Uterus (tissue), 4 donors: ENCODE measurements at regions of chr1 and their contacts with region 1.

Region 1: GRCh38 chr1:77832901-77833300 is 53.5 kb downstream of the MIGA1 start:
- DNase-seq: peak in 1 of 2 donors; percentile 38
- H3K4me3 ChIP-seq: no peak overlapping the region
- H3K27ac ChIP-seq: peak overlapping the region; percentile 87 to 92
- H3K4me1 ChIP-seq: peaks cover 6 to 25% of the 10 kb centered on the region in 2 donors
- H3K27me3 ChIP-seq: no peaks in the 10 kb centered on the region
- CTCF ChIP-seq: no peak
- POLR2A ChIP-seq: no peak

Region 2: DNA sequence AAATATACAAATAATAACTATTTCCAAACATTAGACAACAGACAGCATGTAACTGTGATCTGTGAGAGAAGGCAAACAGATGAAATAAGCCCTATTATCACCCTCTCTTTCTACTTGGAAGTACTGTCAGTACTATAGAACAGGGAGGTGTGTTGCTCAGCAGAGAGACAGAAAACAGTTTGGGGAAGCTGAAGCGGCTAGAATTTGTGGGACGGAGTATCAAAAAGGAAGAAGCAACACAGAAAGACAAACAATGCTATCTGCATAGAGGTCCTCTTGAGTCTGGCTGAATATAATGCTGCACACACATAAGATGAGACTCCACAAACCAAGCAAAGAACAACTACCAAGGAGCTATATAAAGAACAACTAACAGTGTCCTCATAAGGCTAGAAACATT is 209.8 kb before region 1 on chr1:
- intact Hi-C with region 1: no loop called
- DNase-seq: no peak
- H3K4me3 ChIP-seq: no peak overlapping the region
- H3K27ac ChIP-seq: no peak overlapping the region
- H3K4me1 ChIP-seq: no peaks in the 10 kb centered on the region
- H3K27me3 ChIP-seq: no peaks in the 10 kb centered on the region
- CTCF ChIP-seq: no peak
- POLR2A ChIP-seq: no peak

Region 3: DNA sequence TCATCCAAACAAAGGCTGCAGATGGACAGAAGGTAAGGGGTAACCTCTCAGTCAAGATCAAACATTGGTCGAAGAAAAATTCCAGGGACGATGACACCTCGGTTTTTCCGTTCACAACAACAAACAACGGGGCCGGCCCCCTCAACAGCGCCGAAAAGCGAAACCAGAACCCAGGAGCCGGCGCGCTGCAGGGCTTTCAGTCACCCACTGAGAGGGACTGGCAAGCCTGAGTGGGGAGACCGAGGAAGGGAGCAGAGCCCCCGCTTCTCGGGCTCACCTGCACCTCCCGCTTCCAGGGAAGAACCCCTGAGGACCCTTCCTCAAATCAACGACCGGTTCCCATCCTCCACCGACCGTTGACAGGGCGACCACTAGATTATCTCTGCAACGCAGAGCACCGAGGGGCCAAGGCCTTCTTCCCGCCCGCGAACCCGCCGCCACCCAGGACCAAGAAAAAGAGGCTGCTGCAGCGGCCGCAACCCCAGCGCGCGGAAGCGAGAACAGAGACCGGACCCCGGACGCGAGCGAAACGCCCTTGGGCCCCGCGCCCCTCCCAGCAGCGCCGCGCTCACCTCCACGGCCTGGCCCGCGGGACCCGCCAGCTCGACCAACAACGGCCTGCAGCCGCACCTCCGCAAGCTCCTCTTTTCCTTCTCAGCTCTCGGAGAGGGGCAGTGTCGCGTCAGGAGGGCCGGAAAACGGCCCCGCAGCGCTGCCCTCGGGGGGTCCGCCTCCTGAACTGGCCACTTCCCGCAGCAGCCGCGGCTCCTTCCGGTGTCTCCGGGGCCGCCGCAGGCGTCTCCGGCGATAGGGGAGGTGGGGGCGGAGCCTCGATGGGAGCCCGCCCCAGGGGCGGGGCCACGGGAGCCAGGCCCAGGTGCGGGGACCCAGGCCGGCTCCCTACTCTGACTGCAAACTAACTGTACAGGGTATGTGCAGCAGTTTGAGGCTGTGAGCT is 73.6 kb before region 1 on chr1 and contains the start of gene USP33:
- intact Hi-C with region 1: no loop called
- DNase-seq: peak; percentile 83 to 92
- H3K4me3 ChIP-seq: peak within 1 kb of the TSS; percentile 72 to 100
- H3K27ac ChIP-seq: peak within 1 kb of the TSS; percentile 82 to 88
- H3K4me1 ChIP-seq: no peaks in the 10 kb centered on the region
- H3K27me3 ChIP-seq: no peaks in the 10 kb centered on the region
- CTCF ChIP-seq: peak in 2 of 4 experiments; percentile 7 to 18
- POLR2A ChIP-seq: peak; percentile 77 to 87
- total RNA-seq, gene USP33: 67.1 to 193 (median 123) TPM

Region 4: GRCh38 chr1:77888081-77888780 is 55.3 kb after region 1 on chr1 and contains the start of gene NEXN:
- intact Hi-C with region 1: loop called (anchors 10 kb)
- DNase-seq: peak; percentile 83
- H3K4me3 ChIP-seq: peak within 1 kb of the TSS; percentile 61 to 69
- H3K27ac ChIP-seq: peak within 1 kb of the TSS; percentile 91 to 95
- H3K4me1 ChIP-seq: no peaks in the 10 kb centered on the region
- H3K27me3 ChIP-seq: no peaks in the 10 kb centered on the region
- CTCF ChIP-seq: no peak
- POLR2A ChIP-seq: peak; percentile 32 to 55
- total RNA-seq, gene NEXN: 9.5 to 48.4 (median 34.9) TPM